GM10248 (cell line): ENCODE measurements at regions of chr11 and their contacts with region 1.

Region 1: DNA sequence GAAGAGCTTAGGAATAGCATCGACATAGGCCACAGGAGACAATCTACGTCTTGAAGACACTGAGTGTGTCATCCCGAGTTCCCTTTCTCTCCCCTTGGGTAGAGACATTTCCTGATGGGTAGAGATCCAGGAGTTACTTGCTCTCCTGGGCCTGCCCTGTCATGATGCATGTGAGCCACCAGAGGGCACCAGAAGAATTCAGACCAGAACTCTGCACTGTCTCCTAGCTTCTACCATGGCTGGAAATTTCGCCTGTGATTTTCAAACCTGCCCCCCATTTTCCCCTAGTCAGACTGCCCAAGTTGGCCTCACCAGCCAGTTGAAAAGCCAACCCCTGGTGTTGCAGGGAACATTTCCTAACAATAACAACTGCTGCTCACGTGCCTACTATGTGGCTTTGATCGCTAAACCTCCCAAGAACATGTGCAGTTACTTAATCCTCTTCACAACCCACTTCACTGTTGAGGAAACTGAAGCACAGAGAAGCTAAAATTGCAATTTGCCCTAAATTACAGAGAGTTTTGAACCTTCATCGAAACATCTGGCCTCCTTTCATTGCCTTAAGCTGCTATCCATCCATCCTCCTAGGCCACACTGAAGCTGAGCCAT is 47.2 kb downstream of the C11orf58 start:
- DNase-seq: peak; percentile 82
- CTCF ChIP-seq: peak; percentile 90

Region 2: DNA sequence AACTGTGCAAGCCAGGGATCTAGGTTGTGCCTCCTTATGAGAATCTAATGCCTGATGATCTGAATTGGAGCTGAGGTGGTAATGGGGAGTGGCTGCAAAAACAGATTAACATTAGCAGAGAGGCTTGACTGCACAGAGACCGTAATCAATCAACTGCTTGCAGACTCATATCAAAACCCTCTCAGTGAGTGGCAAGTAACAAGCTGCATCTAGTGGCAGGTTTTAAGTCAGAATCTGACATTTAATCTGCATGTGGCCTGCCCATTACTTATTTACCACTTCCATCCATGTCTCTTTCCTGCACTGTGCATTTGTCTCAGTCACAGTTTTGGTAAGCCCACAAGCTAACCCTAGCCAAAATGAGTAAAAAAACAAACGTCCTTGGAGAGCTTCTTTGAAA is 36.0 kb before region 1 on chr11:
- CTCF ChIA-PET with region 1: interaction called, 21 read pairs
- POLR2A ChIA-PET with region 1: no interaction called
- DNase-seq: no peak
- CTCF ChIP-seq: no peak

Region 3: DNA sequence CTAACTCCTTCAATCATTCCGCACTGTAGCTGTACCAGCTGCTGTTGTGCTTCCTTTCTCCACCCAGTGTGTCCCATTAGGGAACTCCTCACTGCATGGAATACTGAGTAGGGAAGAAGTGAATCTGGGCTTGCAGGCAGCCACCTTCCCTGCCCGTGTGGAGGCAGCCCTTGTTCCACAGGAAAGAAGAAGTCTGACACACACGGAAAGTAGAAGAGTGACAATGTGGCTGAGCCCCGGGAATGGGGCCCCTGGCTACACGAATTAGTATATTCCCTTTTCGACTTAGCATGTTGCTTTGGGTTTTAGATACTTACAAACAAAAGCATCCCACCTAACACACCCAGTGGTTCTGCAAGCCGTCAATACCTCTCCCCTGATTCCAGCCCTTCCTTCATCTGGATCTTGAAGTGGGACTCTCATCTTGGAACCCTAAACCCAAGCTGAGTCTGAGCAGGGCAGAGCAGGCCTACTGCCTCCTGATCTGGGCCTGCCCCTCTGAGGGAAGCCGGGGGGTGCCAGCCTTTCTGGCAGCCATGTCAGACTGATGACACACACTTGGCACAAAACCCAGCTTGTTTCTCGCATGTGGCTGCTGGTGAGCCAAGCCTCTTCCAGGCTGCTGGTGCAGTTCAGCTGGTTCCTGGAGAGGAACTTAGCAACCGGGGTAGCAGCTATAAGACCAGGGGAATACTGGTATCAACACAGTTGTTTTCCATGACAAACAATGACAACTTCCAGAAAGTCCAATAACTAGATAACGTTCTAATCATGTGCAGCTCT is 24.5 kb after region 1 on chr11:
- CTCF ChIA-PET with region 1: interaction called, 80 read pairs
- POLR2A ChIA-PET with region 1: no interaction called
- DNase-seq: no peak
- CTCF ChIP-seq: no peak

Region 4: GRCh38 chr11:17014838-17015626 is 229.4 kb after region 1 on chr11:
- CTCF ChIA-PET with region 1: no interaction called
- POLR2A ChIA-PET with region 1: no interaction called
- DNase-seq: peak; percentile 66
- CTCF ChIP-seq: peak; percentile 47

Region 5: GRCh38 chr11:17063171-17064002 is 277.8 kb after region 1 on chr11:
- CTCF ChIA-PET with region 1: interaction called, 106 read pairs
- POLR2A ChIA-PET with region 1: no interaction called
- DNase-seq: peak; percentile 68
- CTCF ChIP-seq: peak; percentile 73

Region 6: GRCh38 chr11:17504330-17505107 is 718.9 kb after region 1 on chr11:
- CTCF ChIA-PET with region 1: interaction called, 10 read pairs
- POLR2A ChIA-PET with region 1: no interaction called
- DNase-seq: peak; percentile 77
- CTCF ChIP-seq: peak; percentile 90

Region 7: GRCh38 chr11:17528181-17528691 is 742.6 kb after region 1 on chr11:
- CTCF ChIA-PET with region 1: interaction called, 20 read pairs
- POLR2A ChIA-PET with region 1: no interaction called
- DNase-seq: peak; percentile 78
- CTCF ChIP-seq: peak; percentile 58